Calu3 (cell line): ENCODE measurements at regions of chr11 and their contacts with region 1.

Region 1: DNA sequence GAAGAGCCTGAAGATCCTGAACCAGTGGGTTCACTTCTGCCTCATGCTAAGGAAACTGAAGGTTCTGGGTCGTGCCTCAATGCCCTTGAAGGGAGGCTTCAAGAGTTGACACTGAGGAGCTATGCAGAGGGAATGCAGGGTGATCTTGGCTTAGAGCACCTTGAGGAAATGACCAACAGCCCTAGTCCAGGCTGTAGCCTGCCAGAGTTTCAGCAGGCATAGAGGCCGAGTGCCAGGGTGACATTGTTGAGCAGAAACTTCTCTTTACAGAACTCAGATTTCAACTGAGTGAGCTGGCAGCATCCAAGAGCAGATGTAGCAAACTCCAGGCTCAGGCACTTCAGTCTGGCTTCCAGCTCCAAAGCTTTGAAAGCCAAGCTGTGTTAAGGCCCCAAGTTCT is 23.1 kb upstream of the CAPRIN1 start:
- DNase-seq: peak; percentile 3
- H3K4me3 Mint-ChIP-seq: peak overlapping the region; percentile 11
- H3K27ac Mint-ChIP-seq: peak overlapping the region; percentile 63
- H3K4me1 Mint-ChIP-seq: peaks cover 17% of the 10 kb centered on the region
- H3K27me3 Mint-ChIP-seq: no peaks in the 10 kb centered on the region
- CTCF ChIP-seq: no peak

Region 2: DNA sequence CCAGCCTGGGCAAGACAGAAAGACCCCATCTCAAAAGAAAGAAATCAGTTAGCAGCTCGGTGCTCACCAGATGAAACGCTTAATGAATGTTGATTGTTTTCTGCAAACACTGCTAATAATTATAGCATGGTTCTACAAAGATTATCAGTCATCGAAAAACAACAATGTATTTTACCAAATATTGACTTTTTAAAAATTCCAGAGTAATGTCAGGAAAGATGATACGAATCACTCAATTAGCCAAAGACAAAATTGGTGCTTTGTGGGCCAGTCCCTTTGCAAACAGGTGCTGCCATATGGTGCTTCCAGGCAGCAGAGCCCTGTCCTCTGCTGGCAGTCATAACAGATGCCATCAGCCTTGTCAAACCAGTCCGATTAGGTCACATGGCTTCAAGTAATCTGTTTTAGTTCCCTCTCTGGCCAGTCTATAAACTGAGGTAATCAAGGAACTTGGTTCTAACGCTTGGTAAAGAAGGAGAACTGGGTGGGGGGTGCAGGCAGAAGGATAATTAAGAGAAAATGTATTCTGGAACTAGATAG is 26.1 kb before region 1 on chr11:
- CTCF ChIA-PET with region 1: no interaction called
- intact Hi-C with region 1: no loop called
- DNase-seq: peak; percentile 57
- H3K4me3 Mint-ChIP-seq: no peak overlapping the region
- H3K27ac Mint-ChIP-seq: no peak overlapping the region
- H3K4me1 Mint-ChIP-seq: peaks cover 18% of the 10 kb centered on the region
- H3K27me3 Mint-ChIP-seq: no peaks in the 10 kb centered on the region
- CTCF ChIP-seq: no peak

Region 3: GRCh38 chr11:34051349-34052035 is 23.1 kb after region 1 on chr11 and contains the start of gene CAPRIN1:
- CTCF ChIA-PET with region 1: interaction called, 11 read pairs
- intact Hi-C with region 1: no loop called
- DNase-seq: peak; percentile 96
- H3K4me3 Mint-ChIP-seq: peak within 1 kb of the TSS; percentile 99
- H3K27ac Mint-ChIP-seq: peak within 1 kb of the TSS; percentile 97
- H3K4me1 Mint-ChIP-seq: peaks cover 14% of the 10 kb centered on the region
- H3K27me3 Mint-ChIP-seq: no peaks in the 10 kb centered on the region
- CTCF ChIP-seq: no peak
- total RNA-seq, gene CAPRIN1: 268 and 273 TPM in 2 replicates

Region 4: GRCh38 chr11:35304386-35304775 is 1276.0 kb after region 1 on chr11:
- CTCF ChIA-PET with region 1: interaction called, 12 read pairs
- intact Hi-C with region 1: no loop called
- DNase-seq: peak; percentile 11
- H3K4me3 Mint-ChIP-seq: no peak overlapping the region
- H3K27ac Mint-ChIP-seq: peak overlapping the region; percentile 56
- H3K4me1 Mint-ChIP-seq: peaks cover 11% of the 10 kb centered on the region
- H3K27me3 Mint-ChIP-seq: no peaks in the 10 kb centered on the region
- CTCF ChIP-seq: no peak